ENCODE measurements at regions of chr4 and their contacts with region 1.

Region 1: GRCh38 chr4:81471588-81472288 is at the start of gene RASGEF1B:
- DNase-seq: peak in 1 of 2 experiments; percentile 82
- H3K4me3 ChIP-seq: peak within 1 kb of the TSS; percentile 62 to 79 (median 70)
- H3K27ac ChIP-seq: no peak within 1 kb of the TSS
- H3K4me1 ChIP-seq: peaks cover 0 to 6% (median 2%) of the 10 kb centered on the region in 4 experiments; a peak in 5 of 7 replicates
- H3K27me3 ChIP-seq: peaks cover 2 to 10% (median 7%) of the 10 kb centered on the region in 4 experiments; a peak in 6 of 7 replicates
- CTCF ChIP-seq: no peak
- EP300 ChIP-seq: no peak
- POLR2A ChIP-seq: no peak
- RAD21 ChIP-seq: peak in 1 of 2 experiments; percentile 8; a peak in 1 of 4 replicates
- total RNA-seq, gene RASGEF1B: 4.6 and 4.7 TPM in 2 replicates

Region 2: GRCh38 chr4:81326581-81326980 is 145.2 kb before region 1 on chr4:
- CTCF ChIA-PET with region 1: no interaction called
- POLR2A ChIA-PET with region 1: no interaction called
- DNase-seq: no peak
- H3K4me3 ChIP-seq: no peak overlapping the region
- H3K27ac ChIP-seq: no peak overlapping the region
- H3K4me1 ChIP-seq: no peaks in the 10 kb centered on the region
- H3K27me3 ChIP-seq: no peaks in the 10 kb centered on the region
- CTCF ChIP-seq: no peak
- EP300 ChIP-seq: no peak
- POLR2A ChIP-seq: no peak
- RAD21 ChIP-seq: no peak

Region 3: GRCh38 chr4:81427344-81427821 is 44.4 kb before region 1 on chr4:
- CTCF ChIA-PET with region 1: interaction called, 11 read pairs
- POLR2A ChIA-PET with region 1: interaction called, 3 read pairs
- DNase-seq: no peak
- H3K4me3 ChIP-seq: peak overlapping the region in 1 of 4 experiments; percentile 21; a peak in 1 of 8 replicates
- H3K27ac ChIP-seq: peak overlapping the region; percentile 49; the same call in 1 of the 2 replicates
- H3K4me1 ChIP-seq: peaks cover 4 to 12% (median 8%) of the 10 kb centered on the region in 4 experiments
- H3K27me3 ChIP-seq: no peaks in the 10 kb centered on the region
- CTCF ChIP-seq: no peak
- EP300 ChIP-seq: no peak
- POLR2A ChIP-seq: no peak
- RAD21 ChIP-seq: no peak

Region 4: GRCh38 chr4:81688085-81688484 is 216.3 kb after region 1 on chr4:
- CTCF ChIA-PET with region 1: interaction called, 47 read pairs
- POLR2A ChIA-PET with region 1: no interaction called
- DNase-seq: no peak
- H3K4me3 ChIP-seq: no peak overlapping the region
- H3K27ac ChIP-seq: no peak overlapping the region
- H3K4me1 ChIP-seq: peaks cover 0 to 5% (median 0%) of the 10 kb centered on the region in 4 experiments; a peak in 1 of 7 replicates
- H3K27me3 ChIP-seq: no peaks in the 10 kb centered on the region
- CTCF ChIP-seq: peak in 2 of 3 experiments; percentile 22 to 42; a peak in 2 of 4 replicates
- EP300 ChIP-seq: no peak
- POLR2A ChIP-seq: no peak
- RAD21 ChIP-seq: peak; percentile 63 to 65

Region 5: GRCh38 chr4:81758574-81759264 is 287.0 kb after region 1 on chr4:
- CTCF ChIA-PET with region 1: interaction called, 10 read pairs
- POLR2A ChIA-PET with region 1: no interaction called
- DNase-seq: no peak
- H3K4me3 ChIP-seq: no peak overlapping the region
- H3K27ac ChIP-seq: no peak overlapping the region
- H3K4me1 ChIP-seq: no peaks in the 10 kb centered on the region
- H3K27me3 ChIP-seq: no peaks in the 10 kb centered on the region
- CTCF ChIP-seq: no peak
- EP300 ChIP-seq: no peak
- POLR2A ChIP-seq: no peak
- RAD21 ChIP-seq: no peak

Region 6: DNA sequence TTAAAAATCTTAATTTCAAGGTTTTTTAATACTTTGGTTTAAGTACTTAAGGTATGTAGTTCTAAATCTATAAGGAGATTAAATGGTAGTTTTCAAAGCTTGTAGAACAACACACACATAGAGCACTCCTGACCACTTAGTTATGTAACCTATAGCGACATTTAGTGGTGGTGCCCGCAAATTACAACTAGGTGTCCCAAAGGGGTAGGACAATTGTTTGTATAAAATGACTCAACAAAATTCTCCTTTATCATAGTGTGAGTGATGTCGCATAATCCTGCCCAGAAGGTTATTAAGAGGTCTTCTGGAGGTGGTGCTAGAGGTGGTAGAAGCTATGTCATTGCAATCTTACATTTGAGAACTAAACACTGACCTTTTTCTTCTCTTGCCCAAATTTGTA is 373.0 kb after region 1 on chr4:
- CTCF ChIA-PET with region 1: interaction called, 38 read pairs
- POLR2A ChIA-PET with region 1: no interaction called
- DNase-seq: peak; percentile 9 to 80
- H3K4me3 ChIP-seq: no peak overlapping the region
- H3K27ac ChIP-seq: no peak overlapping the region
- H3K4me1 ChIP-seq: no peaks in the 10 kb centered on the region
- H3K27me3 ChIP-seq: peaks cover 0 to 1% (median 0%) of the 10 kb centered on the region in 4 experiments; a peak in 1 of 7 replicates
- CTCF ChIP-seq: peak in 2 of 3 experiments; percentile 64 to 77; a peak in 3 of 4 replicates
- EP300 ChIP-seq: no peak
- POLR2A ChIP-seq: no peak
- RAD21 ChIP-seq: peak; percentile 86 to 88

Measured in H1 (cell line).